Posterior vena cava (tissue), 2 donors: ENCODE measurements at regions of chr17 and their contacts with region 1.

Region 1: DNA sequence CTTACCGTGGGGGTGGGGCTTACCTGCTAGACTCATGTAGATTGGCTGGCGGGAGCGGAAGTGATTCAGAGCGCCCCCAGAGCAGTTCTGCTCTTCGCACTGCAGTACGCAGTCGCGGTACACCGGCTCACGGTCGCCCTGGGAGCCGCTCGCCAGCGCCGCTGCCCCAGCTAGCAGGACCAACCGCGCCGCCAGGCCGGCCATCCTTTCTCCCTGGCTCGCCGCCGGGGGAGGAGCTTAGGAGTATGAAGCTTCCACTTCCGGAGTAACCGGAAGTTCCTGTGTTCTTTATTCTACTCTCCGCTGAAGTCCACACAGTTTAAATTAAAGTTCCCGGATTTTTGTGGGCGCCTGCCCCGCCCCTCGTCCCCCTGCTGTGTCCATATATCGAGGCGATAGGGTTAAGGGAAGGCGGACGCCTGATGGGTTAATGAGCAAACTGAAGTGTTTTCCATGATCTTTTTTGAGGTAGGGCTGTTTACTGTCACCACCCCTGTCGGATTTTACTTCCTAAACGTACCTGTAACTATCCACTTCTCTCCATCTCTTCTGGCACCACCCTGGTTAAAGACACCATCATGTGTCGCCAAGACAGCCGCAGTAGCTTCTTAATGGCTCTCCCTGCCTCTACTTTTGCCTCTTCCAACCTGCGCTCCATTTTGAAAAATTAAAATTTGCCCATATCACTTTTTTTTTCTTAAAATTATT is at the start of gene PGAP3:
- DNase-seq: peak; percentile 93
- total RNA-seq, gene PGAP3: 12.0 to 12.3 TPM

Region 2: GRCh38 chr17:39538866-39539265 is 149.1 kb before region 1 on chr17:
- intact Hi-C with region 1: no loop called
- DNase-seq: no peak

Region 3: DNA sequence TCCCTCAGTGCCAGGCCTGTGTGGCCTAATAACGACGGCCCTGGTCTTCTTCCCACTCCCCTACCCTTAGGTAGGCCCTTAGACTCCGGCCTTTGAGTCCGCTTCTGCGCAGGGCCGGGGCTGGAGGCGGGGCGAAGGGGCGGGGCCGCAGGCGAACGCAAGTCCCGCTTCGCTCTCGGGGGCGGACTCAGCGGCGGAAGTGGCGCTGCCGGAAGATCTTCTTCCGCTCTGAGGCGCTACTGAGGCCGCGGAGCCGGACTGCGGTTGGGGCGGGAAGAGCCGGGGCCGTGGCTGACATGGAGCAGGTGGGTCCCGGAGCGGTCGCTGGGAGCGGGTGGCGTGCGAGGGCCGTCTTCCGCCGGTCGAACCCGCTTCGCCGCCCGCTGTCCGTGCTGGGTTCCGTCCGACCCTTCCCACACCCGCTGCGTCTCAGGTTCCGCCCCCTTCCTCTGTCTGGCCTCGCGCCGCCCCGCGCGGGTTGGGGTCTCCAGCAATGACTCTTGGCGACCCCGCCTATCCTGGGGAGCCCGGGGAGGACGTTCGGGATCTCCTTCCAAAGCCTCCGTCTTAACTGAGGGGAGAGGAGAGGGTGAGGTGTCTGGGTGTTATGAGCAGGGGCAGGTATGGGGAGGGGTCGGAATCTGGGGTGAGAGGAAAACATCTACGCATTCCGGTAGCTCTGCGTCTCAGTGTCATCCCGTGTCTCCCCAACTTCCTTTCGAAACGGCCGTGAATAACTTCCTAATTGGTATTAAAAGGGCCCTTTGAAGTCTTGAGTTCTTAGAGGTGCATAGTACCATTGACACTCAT is 50.8 kb before region 1 on chr17 and contains the start of gene STARD3:
- intact Hi-C with region 1: loop called in 1 of 2 experiments (anchors 10 kb)
- DNase-seq: peak; percentile 98
- total RNA-seq, gene STARD3: 32.8 to 35.4 TPM

Region 4: GRCh38 chr17:39665642-39666224 is 22.2 kb before region 1 on chr17:
- intact Hi-C with region 1: loop called in 1 of 2 experiments (anchors 1 kb)
- DNase-seq: no peak

Region 5: DNA sequence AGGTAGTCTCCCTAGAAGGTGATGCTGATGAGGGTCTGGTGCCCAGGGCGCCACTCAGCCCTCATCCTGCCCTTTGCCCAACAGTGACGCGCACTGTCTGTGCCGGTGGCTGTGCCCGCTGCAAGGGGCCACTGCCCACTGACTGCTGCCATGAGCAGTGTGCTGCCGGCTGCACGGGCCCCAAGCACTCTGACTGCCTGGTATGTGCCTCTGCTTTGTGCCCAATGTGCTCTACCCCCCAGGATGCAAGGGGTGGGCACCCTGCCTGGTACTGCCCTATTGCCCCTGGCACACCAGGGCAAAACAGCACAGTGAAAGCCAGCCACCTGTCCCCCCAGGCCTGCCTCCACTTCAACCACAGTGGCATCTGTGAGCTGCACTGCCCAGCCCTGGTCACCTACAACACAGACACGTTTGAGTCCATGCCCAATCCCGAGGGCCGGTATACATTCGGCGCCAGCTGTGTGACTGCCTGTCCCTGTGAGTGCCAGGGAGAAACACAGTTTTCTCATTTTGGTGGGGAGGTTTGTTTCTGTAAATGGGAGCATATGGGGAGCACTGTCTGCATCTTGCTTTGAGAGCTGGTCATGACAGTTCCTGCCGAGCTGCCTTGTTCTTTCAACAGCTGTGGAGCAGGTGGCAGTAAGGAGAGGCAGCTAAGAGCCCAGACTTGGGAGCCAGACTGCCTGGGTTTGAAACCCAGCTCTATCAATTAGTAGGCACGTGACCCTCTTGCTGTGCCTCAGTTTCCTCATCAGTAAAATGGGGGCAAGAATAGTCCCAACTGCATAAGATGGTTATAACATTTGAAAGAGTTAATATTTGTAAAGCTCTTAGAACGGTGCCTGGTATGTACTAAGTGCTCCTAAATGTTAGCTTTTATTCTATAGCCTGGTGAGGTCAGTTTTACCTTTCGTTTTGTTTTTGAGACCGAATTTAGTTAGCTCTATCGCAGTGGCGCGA is 22.3 kb after region 1 on chr17:
- intact Hi-C with region 1: loop called in 1 of 2 experiments (anchors 1 kb)
- DNase-seq: no peak

Region 6: GRCh38 chr17:39782485-39782884 is 94.5 kb after region 1 on chr17:
- intact Hi-C with region 1: no loop called
- DNase-seq: no peak